ENCODE measurements at regions of chr11 and their contacts with region 1.

Region 1: GRCh38 chr11:14643697-14644225 is at the start of gene PDE3B:
- DNase-seq: peak; percentile 93
- H3K4me3 ChIP-seq: peak within 1 kb of the TSS; percentile 80 to 98 (median 90)
- H3K27ac ChIP-seq: peak within 1 kb of the TSS; percentile 88 to 98 (median 96)
- H3K4me1 ChIP-seq: peaks cover 0 to 58% (median 51%) of the 10 kb centered on the region in 4 donors
- H3K27me3 ChIP-seq: no peaks in the 10 kb centered on the region
- CTCF ChIP-seq: no peak
- EP300 ChIP-seq: no peak
- POLR2A ChIP-seq: peak; percentile 59 to 71
- total RNA-seq, gene PDE3B: 78.3 to 132 (median 93.4) TPM

Region 2: DNA sequence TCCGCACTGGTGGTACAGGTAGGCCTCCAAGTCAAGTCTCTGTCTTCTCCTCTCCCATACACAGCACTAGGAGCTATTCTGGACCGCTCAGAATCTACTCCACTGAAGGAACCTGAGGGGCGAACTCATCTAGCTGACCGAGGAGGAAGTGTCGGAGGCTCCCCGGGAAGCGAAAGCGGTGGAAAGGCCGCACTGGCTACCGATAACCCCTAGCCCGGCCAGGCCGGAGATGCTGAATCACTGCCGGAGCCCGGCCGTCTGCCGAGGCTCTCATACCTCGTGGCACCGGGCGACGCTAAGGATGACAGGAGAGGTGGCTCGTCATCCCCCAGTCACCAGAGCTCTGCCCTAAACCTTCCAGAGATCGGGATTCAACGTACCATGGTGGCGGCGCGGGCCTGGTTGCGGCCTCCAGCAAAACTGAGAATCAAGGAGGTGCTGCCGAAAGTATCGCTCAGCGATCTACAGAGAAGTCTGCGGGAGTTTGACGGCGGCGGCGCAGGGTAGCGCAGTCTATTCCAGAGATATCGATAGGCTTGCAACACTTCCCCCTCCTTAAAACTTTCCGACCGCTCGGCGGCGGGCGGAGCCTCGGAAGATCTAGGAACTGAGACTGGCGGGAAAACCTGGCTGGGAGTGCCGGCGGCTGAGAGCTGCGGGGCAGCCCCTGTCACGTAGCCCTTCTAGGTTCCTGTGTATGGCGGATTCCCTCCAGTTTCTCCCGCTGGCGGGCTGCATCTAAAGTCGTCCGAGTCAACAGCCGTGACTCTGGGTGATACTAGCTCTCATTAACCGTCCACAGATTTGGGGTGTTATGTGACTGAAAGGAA is 123.6 kb before region 1 on chr11 and contains the start of gene PSMA1:
- intact Hi-C with region 1: loop called (anchors 5 kb)
- DNase-seq: peak; percentile 97
- H3K4me3 ChIP-seq: peak within 1 kb of the TSS; percentile 74 to 87 (median 79)
- H3K27ac ChIP-seq: peak within 1 kb of the TSS; percentile 87 to 90 (median 88)
- H3K4me1 ChIP-seq: peaks cover 0 to 23% (median 19%) of the 10 kb centered on the region in 4 donors
- H3K27me3 ChIP-seq: no peaks in the 10 kb centered on the region
- CTCF ChIP-seq: peak; percentile 44 to 73 (median 60)
- EP300 ChIP-seq: peak in 1 of 4 donors; percentile 15
- POLR2A ChIP-seq: peak; percentile 37 to 58
- total RNA-seq, gene PSMA1: 109 to 137 (median 123) TPM

Region 3: DNA sequence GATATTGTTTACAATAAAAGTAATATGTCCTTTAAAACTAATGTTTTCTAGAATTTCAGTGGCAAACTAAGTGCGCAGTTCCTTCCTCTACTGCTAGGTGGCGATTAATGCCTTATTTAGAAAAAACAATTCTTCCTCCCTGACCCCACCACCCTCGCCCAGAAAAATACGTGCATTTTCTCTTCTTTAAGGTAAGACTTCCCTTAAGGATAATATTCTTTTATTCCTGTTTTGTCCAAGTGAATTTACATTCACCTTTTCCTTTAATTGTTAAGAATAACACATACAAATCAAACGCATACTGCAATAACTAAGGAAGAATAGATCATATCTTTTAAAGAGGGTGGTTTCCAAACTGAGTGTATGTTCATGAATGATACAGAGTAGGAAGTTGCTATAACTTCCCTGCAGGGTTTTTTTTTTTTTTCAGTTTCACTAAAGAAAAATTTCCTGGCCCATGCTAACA is 106.6 kb before region 1 on chr11:
- intact Hi-C with region 1: loop called (anchors 1 kb)
- DNase-seq: no peak
- H3K4me3 ChIP-seq: no peak overlapping the region
- H3K27ac ChIP-seq: peak overlapping the region in 3 of 4 donors; percentile 57 to 73 (median 73)
- H3K4me1 ChIP-seq: peaks cover 0 to 49% (median 46%) of the 10 kb centered on the region in 4 donors
- H3K27me3 ChIP-seq: no peaks in the 10 kb centered on the region
- CTCF ChIP-seq: peak; percentile 55 to 84 (median 72)
- EP300 ChIP-seq: no peak
- POLR2A ChIP-seq: no peak

Region 4: GRCh38 chr11:14606741-14607140 is 37.0 kb before region 1 on chr11:
- intact Hi-C with region 1: no loop called
- DNase-seq: no peak
- H3K4me3 ChIP-seq: no peak overlapping the region
- H3K27ac ChIP-seq: no peak overlapping the region
- H3K4me1 ChIP-seq: no peaks in the 10 kb centered on the region
- H3K27me3 ChIP-seq: no peaks in the 10 kb centered on the region
- CTCF ChIP-seq: no peak
- EP300 ChIP-seq: no peak
- POLR2A ChIP-seq: no peak

Region 5: GRCh38 chr11:14746857-14747395 is 103.2 kb after region 1 on chr11:
- intact Hi-C with region 1: no loop called
- DNase-seq: no peak
- H3K4me3 ChIP-seq: no peak overlapping the region
- H3K27ac ChIP-seq: peak overlapping the region in 3 of 4 donors; percentile 41 to 73 (median 59)
- H3K4me1 ChIP-seq: peaks cover 0 to 73% (median 46%) of the 10 kb centered on the region in 4 donors
- H3K27me3 ChIP-seq: no peaks in the 10 kb centered on the region
- CTCF ChIP-seq: no peak
- EP300 ChIP-seq: no peak
- POLR2A ChIP-seq: no peak

Region 6: GRCh38 chr11:14764579-14765527 is 121.1 kb after region 1 on chr11:
- intact Hi-C with region 1: loop called (anchors 5 kb)
- DNase-seq: no peak
- H3K4me3 ChIP-seq: no peak overlapping the region
- H3K27ac ChIP-seq: no peak overlapping the region
- H3K4me1 ChIP-seq: peaks cover 0 to 65% (median 29%) of the 10 kb centered on the region in 4 donors
- H3K27me3 ChIP-seq: no peaks in the 10 kb centered on the region
- CTCF ChIP-seq: no peak
- EP300 ChIP-seq: no peak
- POLR2A ChIP-seq: no peak

Region 7: GRCh38 chr11:14803846-14804245 is 160.1 kb after region 1 on chr11:
- intact Hi-C with region 1: no loop called
- DNase-seq: no peak
- H3K4me3 ChIP-seq: no peak overlapping the region
- H3K27ac ChIP-seq: no peak overlapping the region
- H3K4me1 ChIP-seq: no peaks in the 10 kb centered on the region
- H3K27me3 ChIP-seq: no peaks in the 10 kb centered on the region
- CTCF ChIP-seq: no peak
- EP300 ChIP-seq: no peak
- POLR2A ChIP-seq: no peak

Region 8: GRCh38 chr11:14892036-14892567 is 248.3 kb after region 1 on chr11 and contains the start of gene CYP2R1:
- intact Hi-C with region 1: loop called (anchors 5 kb)
- DNase-seq: peak; percentile 97
- H3K4me3 ChIP-seq: peak within 1 kb of the TSS; percentile 69 to 88 (median 78)
- H3K27ac ChIP-seq: peak within 1 kb of the TSS; percentile 89 to 95 (median 92)
- H3K4me1 ChIP-seq: peaks cover 4 to 24% (median 10%) of the 10 kb centered on the region in 4 donors
- H3K27me3 ChIP-seq: no peaks in the 10 kb centered on the region
- CTCF ChIP-seq: no peak
- EP300 ChIP-seq: no peak
- POLR2A ChIP-seq: peak in 1 of 2 donors; percentile 64
- total RNA-seq, gene CYP2R1: 6.1 to 17.5 (median 13.8) TPM

Region 9: GRCh38 chr11:14907411-14908213 is 263.9 kb after region 1 on chr11:
- intact Hi-C with region 1: loop called (anchors 5 kb)
- DNase-seq: peak; percentile 82
- H3K4me3 ChIP-seq: no peak overlapping the region
- H3K27ac ChIP-seq: no peak overlapping the region
- H3K4me1 ChIP-seq: peaks cover 0 to 20% (median 9%) of the 10 kb centered on the region in 4 donors
- H3K27me3 ChIP-seq: no peaks in the 10 kb centered on the region
- CTCF ChIP-seq: peak; percentile 30 to 74 (median 60)
- EP300 ChIP-seq: no peak
- POLR2A ChIP-seq: no peak

Measured in sigmoid colon (tissue), 7 donors.